ENCODE measurements at regions of chr3 and their contacts with region 1.

Region 1: DNA sequence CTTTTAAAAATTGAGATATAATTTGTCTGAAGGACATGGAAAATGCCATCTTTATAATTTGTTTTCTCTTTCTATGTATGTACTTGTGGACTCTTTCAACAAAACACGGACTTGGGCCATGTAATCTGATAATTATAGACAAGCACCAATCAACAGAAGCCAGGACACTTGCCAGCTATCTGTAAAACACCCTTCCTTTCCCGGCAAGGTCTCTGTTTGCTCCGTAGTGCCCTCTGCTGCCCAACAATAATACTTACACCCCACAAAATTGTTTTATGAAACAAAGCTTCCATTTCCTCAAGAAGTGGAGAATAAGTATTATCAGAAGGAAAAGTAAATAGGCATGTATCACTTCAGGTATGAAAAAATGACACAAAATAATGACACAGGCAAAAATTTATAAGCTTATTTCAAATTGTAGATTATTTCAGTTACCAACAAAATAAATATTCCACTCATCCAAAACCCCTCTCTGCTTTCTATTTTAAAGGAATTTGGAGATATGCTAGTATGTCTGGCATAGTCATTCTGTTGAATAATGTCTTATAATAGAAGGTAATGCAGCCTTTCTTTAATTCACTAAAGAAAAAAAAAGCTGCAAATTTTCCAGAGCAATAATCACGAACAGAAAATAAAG is 32.8 kb downstream of the MYH15 start:
- DNase-seq: peak; percentile 72
- ATAC-seq: peak; percentile 73
- H3K4me3 ChIP-seq: no peak overlapping the region
- H3K27ac ChIP-seq: no peak overlapping the region
- H3K4me1 ChIP-seq: peaks cover 15 to 36% of the 10 kb centered on the region in 2 experiments
- H3K27me3 ChIP-seq: no peaks in the 10 kb centered on the region
- CTCF ChIP-seq: peak; percentile 65 to 75 (median 71); a peak in 5 of 6 replicates
- POLR2A ChIP-seq: no peak
- RAD21 ChIP-seq: peak; percentile 80

Region 2: DNA sequence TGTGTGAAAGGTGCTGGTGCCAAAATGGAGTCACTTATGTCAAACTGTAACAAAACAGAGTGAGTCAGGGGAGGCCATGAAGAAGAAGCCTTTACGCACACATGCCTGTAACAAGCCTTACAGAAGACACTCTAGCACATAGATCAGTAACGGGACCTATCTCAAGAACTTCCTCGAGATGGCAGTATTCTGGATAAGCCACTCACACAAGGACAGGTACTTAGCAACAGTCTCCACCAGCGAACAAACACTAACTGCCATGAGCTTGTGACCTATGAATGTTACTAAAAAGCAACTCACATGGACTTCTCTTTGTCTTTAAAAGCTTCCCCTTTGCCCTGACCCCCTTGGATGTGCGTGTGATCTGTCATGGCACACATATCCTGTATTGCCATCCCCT is 621.9 kb before region 1 on chr3:
- CTCF ChIA-PET with region 1: no interaction called
- POLR2A ChIA-PET with region 1: no interaction called
- RAD21 ChIA-PET with region 1: no interaction called
- intact Hi-C with region 1: loop called (anchors 10 kb)
- DNase-seq: peak; percentile 65
- ATAC-seq: peak; percentile 100
- H3K4me3 ChIP-seq: no peak overlapping the region
- H3K27ac ChIP-seq: no peak overlapping the region
- H3K4me1 ChIP-seq: no peaks in the 10 kb centered on the region
- H3K27me3 ChIP-seq: no peaks in the 10 kb centered on the region
- CTCF ChIP-seq: peak; percentile 29 to 68 (median 60); a peak in 5 of 6 replicates
- POLR2A ChIP-seq: no peak
- RAD21 ChIP-seq: peak; percentile 44

Region 3: GRCh38 chr3:108153451-108153981 is 324.1 kb before region 1 on chr3:
- CTCF ChIA-PET with region 1: interaction called, 13 read pairs
- POLR2A ChIA-PET with region 1: no interaction called
- RAD21 ChIA-PET with region 1: no interaction called
- intact Hi-C with region 1: loop called (anchors 1 kb)
- DNase-seq: peak; percentile 62
- ATAC-seq: peak; percentile 93
- H3K4me3 ChIP-seq: no peak overlapping the region
- H3K27ac ChIP-seq: no peak overlapping the region
- H3K4me1 ChIP-seq: peaks cover 3 to 11% of the 10 kb centered on the region in 2 experiments; a peak in 2 of 4 replicates
- H3K27me3 ChIP-seq: no peaks in the 10 kb centered on the region
- CTCF ChIP-seq: peak; percentile 59 to 68 (median 60); a peak in 5 of 6 replicates
- POLR2A ChIP-seq: no peak
- RAD21 ChIP-seq: peak; percentile 82

Measured in HCT116 (cell line).